Right ventricle myocardium inferior (tissue), 1 donor: ENCODE measurements at regions of chr1 and their contacts with region 1.

Region 1: GRCh38 chr1:186178426-186179043 is 196.5 kb downstream of the TPR start:
- DNase-seq: no peak
- ATAC-seq: no peak

Region 2: GRCh38 chr1:185420588-185421081 is 757.9 kb before region 1 on chr1:
- intact Hi-C with region 1: loop called (anchors 5 kb)
- DNase-seq: peak; percentile 61
- ATAC-seq: peak; percentile 28

Region 3: GRCh38 chr1:186102557-186103148 is 75.9 kb before region 1 on chr1:
- intact Hi-C with region 1: no loop called
- DNase-seq: no peak
- ATAC-seq: peak; percentile 46